Activated B cell treated with CpG ODN at 0.5 μM for 24 hours (primary cell): ENCODE measurements at regions of chr12 and their contacts with region 1.

Region 1: GRCh38 chr12:55659486-55660385 is 23.0 kb downstream of the OR10P1 start:
- DNase-seq: no peak
- ATAC-seq: peak; percentile 60
- H3K4me3 Mint-ChIP-seq: no peak overlapping the region
- H3K27ac Mint-ChIP-seq: no peak overlapping the region
- H3K4me1 Mint-ChIP-seq: peaks cover 3% of the 10 kb centered on the region
- H3K27me3 Mint-ChIP-seq: no peaks in the 10 kb centered on the region
- CTCF ChIP-seq: no peak

Region 2: GRCh38 chr12:53757095-53757770 is 1902.5 kb before region 1 on chr12:
- CTCF ChIA-PET with region 1: no interaction called
- POLR2A ChIA-PET with region 1: no interaction called
- intact Hi-C with region 1: loop called (anchors 10 kb)
- DNase-seq: peak; percentile 75
- ATAC-seq: peak; percentile 75
- H3K4me3 Mint-ChIP-seq: peak overlapping the region; percentile 48
- H3K27ac Mint-ChIP-seq: peak overlapping the region; percentile 8
- H3K4me1 Mint-ChIP-seq: peaks cover 22% of the 10 kb centered on the region
- H3K27me3 Mint-ChIP-seq: peaks cover 29% of the 10 kb centered on the region
- CTCF ChIP-seq: no peak

Region 3: GRCh38 chr12:55188974-55189556 is 470.7 kb before region 1 on chr12:
- CTCF ChIA-PET with region 1: interaction called, 17 read pairs
- POLR2A ChIA-PET with region 1: interaction called, 3 read pairs
- intact Hi-C with region 1: loop called (anchors 1 kb)
- DNase-seq: no peak
- ATAC-seq: peak; percentile 81
- H3K4me3 Mint-ChIP-seq: no peak overlapping the region
- H3K27ac Mint-ChIP-seq: no peak overlapping the region
- H3K4me1 Mint-ChIP-seq: no peaks in the 10 kb centered on the region
- H3K27me3 Mint-ChIP-seq: peaks cover 6% of the 10 kb centered on the region
- CTCF ChIP-seq: peak; percentile 87

Region 4: DNA sequence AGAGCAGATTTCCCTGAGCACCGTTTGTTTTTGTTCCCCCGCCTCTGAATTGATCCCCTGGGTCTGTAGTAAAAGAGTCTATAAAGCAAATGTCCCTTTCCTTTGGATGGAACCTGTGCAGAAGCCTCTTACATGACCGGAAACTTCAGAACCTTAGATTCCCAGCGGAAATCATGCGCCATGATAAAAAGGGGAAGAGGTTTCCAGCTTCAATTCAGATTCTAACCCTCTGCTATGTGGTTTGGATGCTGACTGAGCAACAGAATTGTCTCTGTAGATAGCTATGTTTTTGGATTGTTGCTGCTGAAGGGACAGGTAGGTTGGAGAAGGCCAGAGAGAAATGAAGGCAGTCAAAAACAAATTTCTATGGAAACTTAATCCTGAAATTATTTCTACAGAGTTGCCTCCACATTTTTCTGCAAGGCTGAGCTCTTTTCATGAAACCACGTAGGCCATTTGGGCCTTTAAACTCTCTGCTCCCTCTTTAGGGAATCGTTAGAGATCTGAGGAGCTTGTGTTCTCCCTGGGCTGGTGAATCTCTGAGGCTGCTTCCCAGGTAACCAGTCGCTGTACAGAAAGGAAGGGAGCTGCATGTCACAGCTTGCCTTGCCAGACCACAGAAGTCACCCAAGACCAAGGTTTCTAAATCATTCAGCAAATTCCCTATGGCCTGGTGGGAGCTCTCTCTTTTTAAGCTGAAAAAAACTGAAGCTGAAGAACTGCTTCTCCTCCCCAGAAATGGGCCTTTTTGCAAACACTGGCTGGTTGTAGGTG is 51.7 kb before region 1 on chr12:
- CTCF ChIA-PET with region 1: no interaction called
- POLR2A ChIA-PET with region 1: no interaction called
- intact Hi-C with region 1: no loop called
- DNase-seq: no peak
- ATAC-seq: no peak
- H3K4me3 Mint-ChIP-seq: no peak overlapping the region
- H3K27ac Mint-ChIP-seq: no peak overlapping the region
- H3K4me1 Mint-ChIP-seq: no peaks in the 10 kb centered on the region
- H3K27me3 Mint-ChIP-seq: peaks cover 19% of the 10 kb centered on the region
- CTCF ChIP-seq: no peak

Region 5: GRCh38 chr12:55642669-55643068 is 17.1 kb before region 1 on chr12:
- CTCF ChIA-PET with region 1: interaction called, 99 read pairs
- POLR2A ChIA-PET with region 1: interaction called, 15 read pairs
- intact Hi-C with region 1: loop called (anchors 1 kb)
- DNase-seq: no peak
- ATAC-seq: no peak
- H3K4me3 Mint-ChIP-seq: peak overlapping the region; percentile 55
- H3K27ac Mint-ChIP-seq: peak overlapping the region; percentile 68
- H3K4me1 Mint-ChIP-seq: peaks cover 40% of the 10 kb centered on the region
- H3K27me3 Mint-ChIP-seq: peaks cover 2% of the 10 kb centered on the region
- CTCF ChIP-seq: no peak

Region 6: GRCh38 chr12:55715833-55716581 is 56.3 kb after region 1 on chr12 and contains the start of gene BLOC1S1:
- CTCF ChIA-PET with region 1: interaction called, 15 read pairs
- POLR2A ChIA-PET with region 1: no interaction called
- intact Hi-C with region 1: no loop called
- DNase-seq: peak; percentile 92
- ATAC-seq: peak; percentile 94
- H3K4me3 Mint-ChIP-seq: peak within 1 kb of the TSS; percentile 92
- H3K27ac Mint-ChIP-seq: peak within 1 kb of the TSS; percentile 91
- H3K4me1 Mint-ChIP-seq: peaks cover 34% of the 10 kb centered on the region
- H3K27me3 Mint-ChIP-seq: peaks cover 2% of the 10 kb centered on the region
- CTCF ChIP-seq: no peak
- total RNA-seq, gene BLOC1S1: 91.0 and 104 TPM in 2 replicates

Region 7: GRCh38 chr12:55940065-55940732 is 280.5 kb after region 1 on chr12:
- CTCF ChIA-PET with region 1: no interaction called
- POLR2A ChIA-PET with region 1: no interaction called
- intact Hi-C with region 1: loop called (anchors 1 kb)
- DNase-seq: peak; percentile 63
- ATAC-seq: peak; percentile 99
- H3K4me3 Mint-ChIP-seq: no peak overlapping the region
- H3K27ac Mint-ChIP-seq: peak overlapping the region; percentile 47
- H3K4me1 Mint-ChIP-seq: peaks cover 12% of the 10 kb centered on the region
- H3K27me3 Mint-ChIP-seq: no peaks in the 10 kb centered on the region
- CTCF ChIP-seq: peak; percentile 63